Heart right ventricle (tissue), 16 donors: ENCODE measurements at regions of chr6 and their contacts with region 1.

Region 1: DNA sequence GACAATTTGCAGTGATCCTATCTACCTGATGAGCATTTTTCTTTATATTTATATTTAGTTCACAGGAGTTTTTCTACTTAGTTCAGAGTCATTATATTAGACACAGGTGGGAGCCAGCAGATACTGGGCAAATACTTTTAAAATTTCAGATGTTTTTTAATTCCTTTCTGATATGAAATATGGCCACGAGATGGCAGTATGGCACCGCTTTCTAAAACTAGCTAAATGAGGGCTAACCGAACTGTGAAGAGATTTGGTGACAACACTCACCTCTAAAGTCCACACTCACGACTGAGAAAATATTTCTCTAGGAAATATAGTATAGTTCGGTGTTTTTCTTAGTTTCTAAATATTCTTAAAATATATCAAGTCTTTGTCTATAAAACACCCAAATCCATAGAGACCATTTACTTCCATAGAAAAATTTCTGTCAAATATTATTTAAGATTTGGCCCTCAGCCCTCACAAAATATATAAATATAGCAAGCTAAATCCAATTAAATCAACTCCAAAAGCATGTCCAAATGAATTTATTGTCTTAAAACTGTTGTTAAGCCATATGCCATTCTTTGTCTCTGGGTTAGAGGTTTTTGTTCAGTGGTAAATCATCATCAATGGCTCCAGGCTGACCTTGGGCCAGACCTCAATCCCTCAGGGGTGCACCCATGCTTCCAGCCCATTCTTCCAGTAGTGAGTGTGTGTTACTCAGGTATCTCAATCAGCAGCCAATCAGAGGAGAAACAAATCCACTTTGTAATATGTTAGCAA is 63.6 kb downstream of the HUS1B start:
- DNase-seq: peak in 1 of 2 donors; percentile 58
- ATAC-seq: peak in 1 of 8 donors; percentile 37
- H3K4me3 ChIP-seq: no peak overlapping the region
- H3K27ac ChIP-seq: no peak overlapping the region
- H3K4me1 ChIP-seq: peaks cover 0 to 4% (median 0%) of the 10 kb centered on the region in 9 donors
- H3K27me3 ChIP-seq: no peaks in the 10 kb centered on the region
- CTCF ChIP-seq: peak; percentile 65 to 81 (median 70)

Region 2: GRCh38 chr6:710601-711571 is 117.6 kb after region 1 on chr6:
- intact Hi-C with region 1: loop called in 3 of 10 experiments (anchors 10 kb)
- DNase-seq: peak; percentile 59 to 66
- ATAC-seq: peak; percentile 84 to 95 (median 92)
- H3K4me3 ChIP-seq: peak overlapping the region; percentile 58 to 84 (median 70)
- H3K27ac ChIP-seq: peak overlapping the region; percentile 81 to 97 (median 92)
- H3K4me1 ChIP-seq: peaks cover 0 to 20% (median 12%) of the 10 kb centered on the region in 9 donors
- H3K27me3 ChIP-seq: peaks cover 0 to 11% (median 0%) of the 10 kb centered on the region in 7 donors
- CTCF ChIP-seq: peak in 1 of 9 donors; percentile 7

Region 3: DNA sequence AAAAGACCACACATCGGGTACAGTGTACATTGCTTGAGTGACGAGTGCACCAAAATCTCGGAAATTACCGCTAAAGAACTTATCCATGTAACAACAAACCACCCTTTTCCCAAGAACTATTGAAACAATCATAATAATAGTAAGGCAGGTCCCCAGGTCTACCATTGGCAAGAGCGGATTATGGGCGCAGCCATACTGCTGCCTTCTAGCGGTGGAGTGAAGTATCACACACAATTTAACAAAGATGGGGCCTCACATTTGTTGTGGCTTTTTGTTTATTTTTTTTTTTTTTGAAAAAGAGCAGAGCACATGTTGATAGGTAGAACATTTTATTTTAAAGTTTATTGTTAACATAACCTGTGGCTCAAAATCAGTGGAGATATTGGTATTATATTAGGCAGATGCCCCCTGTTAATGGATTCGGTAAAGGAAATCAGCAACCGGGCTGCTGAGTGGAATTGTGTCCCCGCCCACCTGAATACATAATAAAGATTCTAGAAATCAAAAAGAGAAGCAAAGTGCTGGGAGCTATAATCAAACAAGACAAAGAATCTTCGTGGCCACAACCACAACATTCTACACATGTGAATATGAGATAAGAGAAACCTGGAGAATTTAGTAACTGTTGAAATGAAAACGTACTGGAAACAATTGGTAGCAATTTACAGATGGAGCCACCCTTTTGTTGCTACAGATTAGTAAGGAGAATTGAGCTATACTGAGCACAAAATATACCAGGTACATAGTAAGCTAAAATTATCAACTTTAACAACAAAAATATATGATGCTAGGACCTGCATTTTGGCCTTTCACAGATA is 193.8 kb after region 1 on chr6:
- intact Hi-C with region 1: loop called in 8 of 10 experiments (anchors 2 to 10 kb)
- DNase-seq: no peak
- ATAC-seq: no peak
- H3K4me3 ChIP-seq: no peak overlapping the region
- H3K27ac ChIP-seq: no peak overlapping the region
- H3K4me1 ChIP-seq: no peaks in the 10 kb centered on the region
- H3K27me3 ChIP-seq: peaks cover 0 to 54% (median 24%) of the 10 kb centered on the region in 7 donors
- CTCF ChIP-seq: peak in 8 of 9 donors; percentile 36 to 64 (median 57)

Region 4: DNA sequence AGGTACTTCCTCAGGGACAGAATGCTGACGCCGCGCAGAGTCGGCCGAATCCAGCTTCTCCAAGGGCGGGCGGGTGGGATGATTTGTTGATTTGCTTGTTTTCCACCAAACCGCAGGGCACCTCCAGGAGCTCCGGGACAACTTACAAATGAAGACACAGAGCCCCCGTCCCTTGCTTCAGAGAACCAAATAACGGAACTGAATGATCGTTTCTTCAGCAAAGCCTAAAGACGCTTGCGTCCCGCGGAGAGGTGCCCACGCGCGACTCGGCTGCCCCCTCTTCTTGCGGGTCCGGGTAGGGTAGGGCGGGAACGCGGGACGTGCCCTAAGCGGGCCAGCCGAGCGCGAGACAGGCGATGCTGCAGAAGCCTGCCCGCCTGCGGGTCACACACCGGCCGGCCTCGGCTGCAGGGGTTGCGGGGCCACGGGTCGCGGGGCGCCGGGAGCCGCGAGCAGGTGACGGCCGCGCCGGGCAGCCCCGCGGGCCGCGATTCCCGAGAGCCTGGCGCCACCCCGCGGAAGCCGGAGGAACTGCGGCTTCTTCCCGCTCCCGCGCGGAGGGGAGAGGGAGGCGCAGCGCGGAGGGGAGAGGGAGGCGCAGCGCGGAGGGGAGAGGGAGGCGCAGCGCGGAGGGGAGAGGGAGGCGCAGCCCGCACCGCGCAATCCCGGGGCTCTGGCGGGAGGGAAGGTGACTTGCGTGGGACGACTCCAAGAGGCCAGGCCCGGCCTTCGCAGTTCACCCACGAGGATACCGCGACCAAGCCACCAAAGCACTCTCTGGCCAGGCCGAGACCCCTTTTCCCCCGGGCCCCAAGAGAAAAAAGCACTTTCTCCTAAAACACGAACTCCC is 788.4 kb after region 1 on chr6:
- intact Hi-C with region 1: loop called in 3 of 10 experiments (anchors 5 to 10 kb)
- DNase-seq: peak; percentile 29 to 55
- ATAC-seq: peak; percentile 77 to 88 (median 85)
- H3K4me3 ChIP-seq: peak overlapping the region in 9 of 10 donors; percentile 16 to 39 (median 31)
- H3K27ac ChIP-seq: no peak overlapping the region
- H3K4me1 ChIP-seq: peaks cover 8 to 59% (median 40%) of the 10 kb centered on the region in 9 donors
- H3K27me3 ChIP-seq: peaks cover 67 to 100% (median 100%) of the 10 kb centered on the region in 7 donors
- CTCF ChIP-seq: peak; percentile 68 to 93 (median 83)

Region 5: DNA sequence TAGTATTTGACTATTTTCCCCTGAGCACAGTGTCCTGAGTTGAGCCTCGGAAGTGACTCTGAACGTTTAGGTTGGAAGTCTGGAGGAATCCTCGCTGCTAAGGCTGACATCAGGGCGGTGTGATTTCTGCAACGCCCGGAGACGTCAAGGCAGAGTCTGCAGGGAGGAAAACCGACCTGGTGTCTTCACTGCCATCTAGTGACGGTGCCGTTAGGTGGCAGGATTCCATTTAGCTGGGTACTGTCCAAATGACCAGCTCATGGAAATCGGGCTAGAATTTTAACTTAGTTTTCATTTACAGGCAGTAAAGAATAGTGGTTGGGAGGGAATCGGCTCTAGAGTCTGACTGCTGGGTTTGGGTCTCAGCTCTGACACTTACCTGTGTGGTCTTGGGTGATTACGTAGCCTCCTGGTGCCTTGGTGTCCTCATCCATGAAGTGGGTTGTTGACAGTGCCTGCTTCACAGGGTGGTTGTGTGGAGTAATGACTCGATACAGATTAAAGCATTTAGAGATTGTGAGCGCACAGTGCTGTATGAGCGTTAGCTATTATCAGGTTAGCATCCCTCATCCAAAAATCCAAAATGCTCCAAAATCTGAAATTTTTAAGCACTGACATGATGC is 831.1 kb after region 1 on chr6:
- intact Hi-C with region 1: loop called in 1 of 10 experiments (anchors 10 kb)
- DNase-seq: peak in 1 of 2 donors; percentile 33
- ATAC-seq: peak in 2 of 8 donors; percentile 45 to 55
- H3K4me3 ChIP-seq: no peak overlapping the region
- H3K27ac ChIP-seq: no peak overlapping the region
- H3K4me1 ChIP-seq: no peaks in the 10 kb centered on the region
- H3K27me3 ChIP-seq: peaks cover 0 to 53% (median 42%) of the 10 kb centered on the region in 7 donors
- CTCF ChIP-seq: peak in 6 of 9 donors; percentile 34 to 60 (median 55)